ENCODE measurements at regions of chr20 and their contacts with region 1.

Region 1: GRCh38 chr20:5448449-5449118 is 131.8 kb upstream of the PROKR2 start:
- DNase-seq: no peak
- ATAC-seq: peak; percentile 75
- H3K4me3 ChIP-seq: no peak overlapping the region
- H3K27ac ChIP-seq: no peak overlapping the region
- H3K4me1 ChIP-seq: no peaks in the 10 kb centered on the region
- H3K27me3 ChIP-seq: no peaks in the 10 kb centered on the region
- CTCF ChIP-seq: peak; percentile 65 to 72 (median 67)
- EP300 ChIP-seq: no peak
- POLR2A ChIP-seq: no peak
- RAD21 ChIP-seq: peak; percentile 60

Region 2: GRCh38 chr20:5205348-5206210 is 243.0 kb before region 1 on chr20:
- CTCF ChIA-PET with region 1: interaction called, 17 read pairs
- POLR2A ChIA-PET with region 1: no interaction called
- RAD21 ChIA-PET with region 1: interaction called, 15 read pairs
- SMC1A ChIA-PET with region 1: interaction called, 8 read pairs
- in situ Hi-C with region 1: loop called (anchors 5 kb)
- intact Hi-C with region 1: loop called (anchors 1 kb)
- DNase-seq: no peak
- ATAC-seq: peak; percentile 100
- H3K4me3 ChIP-seq: no peak overlapping the region
- H3K27ac ChIP-seq: no peak overlapping the region
- H3K4me1 ChIP-seq: no peaks in the 10 kb centered on the region
- H3K27me3 ChIP-seq: no peaks in the 10 kb centered on the region
- CTCF ChIP-seq: peak; percentile 88 to 89 (median 89)
- EP300 ChIP-seq: no peak
- POLR2A ChIP-seq: no peak
- RAD21 ChIP-seq: peak; percentile 76

Region 3: GRCh38 chr20:5222919-5223634 is 225.5 kb before region 1 on chr20:
- CTCF ChIA-PET with region 1: interaction called, 10 read pairs
- POLR2A ChIA-PET with region 1: no interaction called
- RAD21 ChIA-PET with region 1: no interaction called
- SMC1A ChIA-PET with region 1: interaction called, 3 read pairs
- in situ Hi-C with region 1: no loop called
- intact Hi-C with region 1: no loop called
- DNase-seq: peak; percentile 13
- ATAC-seq: peak; percentile 92
- H3K4me3 ChIP-seq: no peak overlapping the region
- H3K27ac ChIP-seq: no peak overlapping the region
- H3K4me1 ChIP-seq: no peaks in the 10 kb centered on the region
- H3K27me3 ChIP-seq: no peaks in the 10 kb centered on the region
- CTCF ChIP-seq: peak; percentile 75 to 94 (median 91)
- EP300 ChIP-seq: no peak
- POLR2A ChIP-seq: no peak
- RAD21 ChIP-seq: peak; percentile 75

Region 4: DNA sequence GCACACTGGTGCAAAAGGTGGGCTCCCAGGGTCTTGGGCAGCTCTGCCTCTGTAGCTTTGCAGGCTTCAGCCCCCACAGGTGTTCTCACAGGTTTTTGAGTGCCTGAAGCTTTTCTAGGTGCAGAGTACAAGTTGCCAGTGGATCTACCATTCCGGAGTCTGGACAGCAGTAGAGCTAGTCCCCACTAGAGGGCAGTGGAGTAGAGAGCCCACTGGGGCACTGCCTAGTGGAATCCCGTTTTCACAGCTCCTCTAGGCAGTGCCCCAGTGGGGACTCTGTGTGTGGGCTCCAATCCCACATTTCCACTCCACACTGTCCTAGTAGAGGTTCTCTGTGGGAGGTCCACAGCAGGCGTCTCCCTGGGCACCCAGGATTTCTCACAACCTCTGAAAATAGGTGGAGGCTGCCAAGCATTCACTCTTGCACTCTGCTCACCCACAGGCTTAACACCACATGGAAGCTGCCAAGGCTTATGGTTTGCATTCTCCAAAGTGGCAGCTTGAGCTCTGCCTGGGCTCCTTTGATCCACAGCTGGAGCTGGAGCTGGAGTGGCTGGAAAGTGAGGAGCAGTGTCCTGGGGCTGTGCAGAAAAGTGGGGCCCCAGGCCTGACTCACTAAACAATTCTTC is 45.6 kb before region 1 on chr20:
- CTCF ChIA-PET with region 1: interaction called, 44 read pairs
- POLR2A ChIA-PET with region 1: no interaction called
- RAD21 ChIA-PET with region 1: interaction called, 3 read pairs
- SMC1A ChIA-PET with region 1: interaction called, 10 read pairs
- in situ Hi-C with region 1: no loop called
- intact Hi-C with region 1: loop called (anchors 2 kb)
- DNase-seq: no peak
- ATAC-seq: peak; percentile 96
- H3K4me3 ChIP-seq: no peak overlapping the region
- H3K27ac ChIP-seq: no peak overlapping the region
- H3K4me1 ChIP-seq: no peaks in the 10 kb centered on the region
- H3K27me3 ChIP-seq: no peaks in the 10 kb centered on the region
- CTCF ChIP-seq: peak; percentile 65 to 85 (median 66)
- EP300 ChIP-seq: no peak
- POLR2A ChIP-seq: no peak
- RAD21 ChIP-seq: peak; percentile 52

Region 5: DNA sequence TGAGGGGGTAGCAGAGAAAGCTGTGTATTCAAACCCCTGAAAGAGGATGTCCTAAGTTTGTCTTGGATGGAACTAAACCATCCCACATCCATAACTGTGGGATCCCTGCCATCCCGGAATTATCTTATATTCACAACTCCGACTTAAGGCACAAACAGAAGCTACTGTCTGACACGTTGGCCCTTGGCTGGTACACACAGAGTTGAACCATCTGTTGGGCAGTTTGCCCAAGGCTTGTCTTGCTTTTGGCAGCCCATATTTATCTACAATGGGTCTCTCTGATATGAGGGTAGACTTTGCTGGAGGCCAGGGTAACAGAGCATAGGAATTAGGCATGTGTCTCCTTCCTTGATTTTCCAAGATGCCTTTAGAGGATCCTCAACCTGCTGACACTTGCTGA is 15.2 kb before region 1 on chr20:
- CTCF ChIA-PET with region 1: interaction called, 30 read pairs
- POLR2A ChIA-PET with region 1: interaction called, 4 read pairs
- RAD21 ChIA-PET with region 1: interaction called, 6 read pairs
- SMC1A ChIA-PET with region 1: interaction called, 4 read pairs
- in situ Hi-C with region 1: no loop called
- intact Hi-C with region 1: no loop called
- DNase-seq: no peak
- ATAC-seq: no peak
- H3K4me3 ChIP-seq: no peak overlapping the region
- H3K27ac ChIP-seq: no peak overlapping the region
- H3K4me1 ChIP-seq: no peaks in the 10 kb centered on the region
- H3K27me3 ChIP-seq: peaks cover 0 to 2% of the 10 kb centered on the region in 2 experiments; a peak in 2 of 4 replicates
- CTCF ChIP-seq: no peak
- EP300 ChIP-seq: no peak
- POLR2A ChIP-seq: no peak
- RAD21 ChIP-seq: no peak

Region 6: DNA sequence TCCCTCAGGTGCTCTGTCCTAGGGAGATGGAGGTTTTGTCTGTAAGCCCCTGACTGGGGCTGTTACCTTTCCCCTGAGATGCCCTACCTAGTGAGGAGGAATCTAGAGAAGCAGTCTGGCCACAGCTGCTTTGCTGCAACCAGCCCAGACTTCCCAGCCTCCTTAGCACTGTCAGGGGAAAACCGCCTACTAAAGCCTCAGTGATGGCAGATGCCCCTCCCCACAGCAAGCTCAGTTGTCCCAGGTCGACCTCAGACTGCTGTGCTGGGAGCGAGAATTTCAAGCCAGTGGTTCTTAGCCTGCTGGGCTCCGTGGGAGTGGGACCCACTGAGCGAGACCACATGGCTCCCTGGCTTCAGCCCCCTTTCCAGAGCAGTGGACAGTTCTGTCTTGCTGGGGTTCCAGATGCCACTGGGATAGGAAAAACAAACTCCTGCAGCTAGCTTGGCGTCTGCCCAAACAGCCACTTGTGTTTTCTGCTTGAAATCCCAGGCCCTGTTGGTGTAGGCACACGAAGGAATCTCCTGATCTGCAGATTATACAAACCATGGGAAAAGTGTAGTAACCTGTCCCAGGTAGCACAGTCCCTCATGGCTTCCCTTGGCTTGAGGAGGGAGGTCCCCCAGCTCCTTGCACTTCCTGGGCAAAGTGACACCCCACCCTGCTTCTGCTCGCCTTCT is 14.6 kb after region 1 on chr20:
- CTCF ChIA-PET with region 1: interaction called, 26 read pairs
- POLR2A ChIA-PET with region 1: no interaction called
- RAD21 ChIA-PET with region 1: no interaction called
- SMC1A ChIA-PET with region 1: interaction called, 6 read pairs
- in situ Hi-C with region 1: no loop called
- intact Hi-C with region 1: no loop called
- DNase-seq: no peak
- ATAC-seq: no peak
- H3K4me3 ChIP-seq: no peak overlapping the region
- H3K27ac ChIP-seq: no peak overlapping the region
- H3K4me1 ChIP-seq: no peaks in the 10 kb centered on the region
- H3K27me3 ChIP-seq: no peaks in the 10 kb centered on the region
- CTCF ChIP-seq: no peak
- EP300 ChIP-seq: no peak
- POLR2A ChIP-seq: no peak
- RAD21 ChIP-seq: no peak

Region 7: GRCh38 chr20:5469111-5469510 is 20.5 kb after region 1 on chr20:
- CTCF ChIA-PET with region 1: interaction called, 10 read pairs
- POLR2A ChIA-PET with region 1: no interaction called
- RAD21 ChIA-PET with region 1: no interaction called
- SMC1A ChIA-PET with region 1: no interaction called
- in situ Hi-C with region 1: no loop called
- intact Hi-C with region 1: no loop called
- DNase-seq: no peak
- ATAC-seq: no peak
- H3K4me3 ChIP-seq: no peak overlapping the region
- H3K27ac ChIP-seq: no peak overlapping the region
- H3K4me1 ChIP-seq: no peaks in the 10 kb centered on the region
- H3K27me3 ChIP-seq: no peaks in the 10 kb centered on the region
- CTCF ChIP-seq: no peak
- EP300 ChIP-seq: no peak
- POLR2A ChIP-seq: no peak
- RAD21 ChIP-seq: no peak

Measured in GM12878 (cell line).